Uterus (tissue), 4 donors: ENCODE measurements at regions of chr10 and their contacts with region 1.

Region 1: GRCh38 chr10:63711867-63712716 is 190.9 kb downstream of the REEP3 start:
- DNase-seq: peak; percentile 85 to 92
- H3K4me3 ChIP-seq: no peak overlapping the region
- H3K27ac ChIP-seq: peak overlapping the region; percentile 74 to 78
- H3K4me1 ChIP-seq: peaks cover 0 to 22% of the 10 kb centered on the region in 2 donors
- H3K27me3 ChIP-seq: no peaks in the 10 kb centered on the region
- CTCF ChIP-seq: no peak
- POLR2A ChIP-seq: no peak

Region 2: DNA sequence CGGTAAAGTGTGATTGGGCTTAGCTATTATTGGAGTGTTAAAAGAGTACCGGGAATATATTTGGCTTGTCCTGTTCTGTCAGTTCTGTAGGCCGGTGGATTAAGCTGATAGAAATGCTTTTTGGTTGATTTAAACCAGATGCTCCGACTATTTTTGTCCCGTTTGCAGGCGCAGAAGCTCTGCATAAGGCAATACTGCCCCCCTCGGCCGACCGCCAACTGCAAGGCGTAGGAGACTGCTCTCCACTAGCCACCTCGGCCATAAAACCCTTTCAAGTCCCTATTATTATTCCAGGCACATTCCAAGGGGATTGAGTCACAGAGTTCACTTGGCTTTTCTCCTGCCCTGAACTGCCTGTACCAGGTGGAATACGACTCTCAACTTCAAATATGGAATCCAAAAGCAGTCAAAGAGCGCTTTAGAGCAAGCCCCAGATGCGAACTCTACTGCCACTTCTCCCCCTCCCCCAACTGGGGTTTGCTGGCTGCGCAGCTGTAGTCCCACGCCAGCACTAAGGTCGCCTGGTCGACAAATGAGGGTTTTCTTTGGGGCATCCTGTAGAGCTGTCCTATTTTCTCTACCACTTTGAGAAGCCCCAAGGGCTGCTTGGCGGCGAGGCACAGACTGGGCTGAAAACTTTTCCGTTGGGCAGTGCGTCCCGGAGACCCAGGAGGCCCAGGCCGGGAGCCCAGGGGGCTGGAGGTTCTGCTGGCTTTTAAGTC is 82.6 kb before region 1 on chr10:
- intact Hi-C with region 1: loop called (anchors 10 kb)
- DNase-seq: peak; percentile 97 to 99
- H3K4me3 ChIP-seq: peak overlapping the region; percentile 33 to 57
- H3K27ac ChIP-seq: peak overlapping the region; percentile 89 to 98
- H3K4me1 ChIP-seq: no peaks in the 10 kb centered on the region
- H3K27me3 ChIP-seq: no peaks in the 10 kb centered on the region
- CTCF ChIP-seq: peak; percentile 47 to 76 (median 66)
- POLR2A ChIP-seq: peak in 1 of 2 donors; percentile 10